Naive thymus-derived CD4-positive, alpha-beta T cell (primary cell): ENCODE measurements at regions of chr12 and their contacts with region 1.

Region 1: GRCh38 chr12:6423267-6424007 is 21.3 kb upstream of the CD27 start:
- DNase-seq: peak; percentile 47 to 88 (median 80)
- ATAC-seq: peak; percentile 90
- H3K4me3 ChIP-seq: no peak overlapping the region
- H3K4me3 Mint-ChIP-seq: peak overlapping the region in 7 of 10 donors; percentile 10 to 69 (median 27)
- H3K27ac ChIP-seq: peak overlapping the region; percentile 56
- H3K27ac Mint-ChIP-seq: peak overlapping the region; percentile 66 to 97 (median 86)
- H3K4me1 ChIP-seq: peaks cover 30 to 31% of the 10 kb centered on the region in 2 donors
- H3K4me1 Mint-ChIP-seq: peaks cover 18 to 46% (median 38%) of the 10 kb centered on the region in 7 donors
- H3K27me3 ChIP-seq: no peaks in the 10 kb centered on the region
- H3K27me3 Mint-ChIP-seq: no peaks in the 10 kb centered on the region

Region 2: GRCh38 chr12:6335451-6336078 is 87.9 kb before region 1 on chr12:
- CTCF ChIA-PET with region 1: interaction called, 13 read pairs
- POLR2A ChIA-PET with region 1: interaction called, 28 read pairs
- intact Hi-C with region 1: loop called (anchors 1 kb)
- DNase-seq: peak; percentile 56 to 85 (median 81)
- ATAC-seq: peak; percentile 82
- H3K4me3 ChIP-seq: peak overlapping the region; percentile 88
- H3K4me3 Mint-ChIP-seq: no peak overlapping the region
- H3K27ac ChIP-seq: peak overlapping the region; percentile 92
- H3K27ac Mint-ChIP-seq: no peak overlapping the region
- H3K4me1 ChIP-seq: peaks cover 58 to 67% of the 10 kb centered on the region in 2 donors
- H3K4me1 Mint-ChIP-seq: peaks cover 4 to 44% (median 36%) of the 10 kb centered on the region in 7 donors
- H3K27me3 ChIP-seq: no peaks in the 10 kb centered on the region
- H3K27me3 Mint-ChIP-seq: no peaks in the 10 kb centered on the region

Region 3: DNA sequence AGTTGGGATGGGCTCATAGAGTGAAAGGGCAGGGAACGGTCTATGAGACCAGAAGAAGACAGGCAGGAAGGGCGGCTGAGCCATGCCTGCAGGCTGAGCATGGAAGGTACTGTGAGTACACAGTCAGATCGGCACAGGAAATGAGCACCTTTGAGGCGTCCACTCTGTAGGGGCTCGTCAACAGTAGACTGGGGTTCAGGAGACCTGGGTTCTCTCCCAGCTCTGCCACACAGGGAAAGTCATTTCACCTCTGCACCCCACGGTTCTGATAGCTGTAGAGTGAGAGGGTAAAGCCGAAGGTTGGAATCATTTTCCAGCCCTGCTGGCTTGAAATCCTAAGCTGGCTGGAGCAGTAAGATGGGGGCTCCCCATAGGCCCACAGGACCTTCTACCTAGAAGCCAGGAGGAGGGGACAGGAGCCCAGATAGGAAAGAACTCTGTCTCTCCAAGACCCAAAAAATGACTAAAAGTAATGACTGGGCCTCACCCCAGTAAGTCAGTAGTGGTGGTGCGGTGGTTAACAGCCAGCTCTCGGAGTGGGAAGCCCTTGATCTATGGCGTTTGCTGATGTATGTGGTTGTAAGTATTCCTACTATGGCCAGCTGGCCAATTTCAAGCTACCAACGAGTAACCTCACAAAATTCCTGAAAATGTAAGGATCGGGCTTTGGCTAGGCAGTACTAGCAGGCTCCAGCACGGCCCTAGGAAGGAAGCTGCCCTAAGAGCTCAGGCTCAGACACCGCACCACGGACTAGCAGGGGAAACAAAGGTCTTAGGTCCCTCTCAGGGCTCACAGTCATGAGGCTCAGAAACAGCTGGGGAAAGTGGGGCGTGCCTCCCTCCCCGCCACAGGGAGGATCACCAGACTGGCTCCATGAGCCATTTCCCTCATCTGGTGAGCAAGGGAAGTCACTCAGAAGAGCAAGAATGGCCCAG is 11.0 kb after region 1 on chr12:
- CTCF ChIA-PET with region 1: interaction called, 25 read pairs
- POLR2A ChIA-PET with region 1: interaction called, 156 read pairs
- intact Hi-C with region 1: no loop called
- DNase-seq: peak in 7 of 9 donors; percentile 41 to 60 (median 56)
- ATAC-seq: peak; percentile 80
- H3K4me3 ChIP-seq: peak overlapping the region; percentile 30
- H3K4me3 Mint-ChIP-seq: peak overlapping the region; percentile 55 to 85 (median 76)
- H3K27ac ChIP-seq: peak overlapping the region; percentile 68
- H3K27ac Mint-ChIP-seq: peak overlapping the region; percentile 90 to 98 (median 92)
- H3K4me1 ChIP-seq: peaks cover 18 to 30% of the 10 kb centered on the region in 2 donors
- H3K4me1 Mint-ChIP-seq: peaks cover 24 to 59% (median 53%) of the 10 kb centered on the region in 7 donors
- H3K27me3 ChIP-seq: no peaks in the 10 kb centered on the region
- H3K27me3 Mint-ChIP-seq: no peaks in the 10 kb centered on the region

Region 4: GRCh38 chr12:6451348-6452244 is 28.2 kb after region 1 on chr12 and contains the start of gene TAPBPL:
- CTCF ChIA-PET with region 1: interaction called, 51 read pairs
- POLR2A ChIA-PET with region 1: interaction called, 156 read pairs
- intact Hi-C with region 1: loop called (anchors 1 kb)
- DNase-seq: peak; percentile 49 to 93 (median 87)
- ATAC-seq: peak; percentile 94
- H3K4me3 ChIP-seq: peak within 1 kb of the TSS; percentile 83
- H3K4me3 Mint-ChIP-seq: peak within 1 kb of the TSS; percentile 96 to 100 (median 98)
- H3K27ac ChIP-seq: peak within 1 kb of the TSS; percentile 96
- H3K27ac Mint-ChIP-seq: peak within 1 kb of the TSS; percentile 96 to 100 (median 99)
- H3K4me1 ChIP-seq: peaks cover 50% of the 10 kb centered on the region in 2 donors
- H3K4me1 Mint-ChIP-seq: peaks cover 50 to 84% (median 73%) of the 10 kb centered on the region in 7 donors
- H3K27me3 ChIP-seq: no peaks in the 10 kb centered on the region
- H3K27me3 Mint-ChIP-seq: no peaks in the 10 kb centered on the region
- total RNA-seq, gene TAPBPL: 23.0 to 65.4 (median 52.9) TPM

Region 5: GRCh38 chr12:6470375-6471163 is 47.1 kb after region 1 on chr12 and contains the start of gene VAMP1:
- CTCF ChIA-PET with region 1: interaction called, 201 read pairs
- POLR2A ChIA-PET with region 1: interaction called, 237 read pairs
- intact Hi-C with region 1: loop called (anchors 1 kb)
- DNase-seq: peak; percentile 90 to 97 (median 95)
- ATAC-seq: peak; percentile 94
- H3K4me3 ChIP-seq: peak within 1 kb of the TSS; percentile 96
- H3K4me3 Mint-ChIP-seq: peak within 1 kb of the TSS; percentile 85 to 96 (median 92)
- H3K27ac ChIP-seq: peak within 1 kb of the TSS; percentile 75
- H3K27ac Mint-ChIP-seq: peak within 1 kb of the TSS; percentile 79 to 99 (median 95)
- H3K4me1 ChIP-seq: peaks cover 38 to 39% of the 10 kb centered on the region in 2 donors
- H3K4me1 Mint-ChIP-seq: peaks cover 26 to 59% (median 52%) of the 10 kb centered on the region in 7 donors
- H3K27me3 ChIP-seq: no peaks in the 10 kb centered on the region
- H3K27me3 Mint-ChIP-seq: peaks cover 0 to 5% (median 0%) of the 10 kb centered on the region in 5 donors
- total RNA-seq, gene VAMP1: 38.7 to 123 (median 47.9) TPM

Region 6: DNA sequence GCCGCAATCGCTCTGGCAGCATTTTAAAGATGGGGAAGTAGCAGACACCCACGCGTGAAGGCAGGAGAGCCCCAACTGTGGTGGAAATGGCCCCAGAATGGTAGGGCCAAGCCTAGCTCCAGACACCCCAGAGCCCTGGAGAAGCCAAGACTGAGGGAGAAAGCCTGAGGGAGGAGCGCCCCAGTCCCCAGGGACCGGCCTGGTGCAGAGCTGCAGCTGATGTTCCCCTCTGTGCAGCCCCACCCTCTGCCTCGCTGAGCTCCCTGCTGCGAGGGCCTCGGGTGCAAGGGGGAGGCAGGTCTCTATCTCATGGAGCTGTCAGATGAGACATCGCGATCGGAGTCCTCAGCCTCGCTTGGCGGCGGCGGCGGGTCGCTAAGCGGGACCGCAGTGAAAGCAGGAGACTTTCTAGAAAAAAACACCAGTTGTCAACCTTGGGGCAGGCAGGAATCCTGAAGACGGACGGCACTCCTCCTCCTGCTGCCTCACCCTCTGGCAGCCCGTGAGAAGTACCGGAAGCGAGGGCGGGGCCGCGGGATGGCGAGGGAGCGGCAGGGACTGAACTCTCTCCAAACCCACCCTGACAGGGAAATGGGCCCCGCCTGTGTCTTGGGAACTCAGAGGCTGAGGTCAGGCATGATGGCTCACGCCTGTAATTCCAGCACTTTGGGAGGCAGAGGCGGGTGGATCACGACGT is 116.9 kb after region 1 on chr12:
- CTCF ChIA-PET with region 1: interaction called, 106 read pairs
- POLR2A ChIA-PET with region 1: interaction called, 104 read pairs
- intact Hi-C with region 1: loop called (anchors 1 kb)
- DNase-seq: peak in 6 of 9 donors; percentile 29 to 69 (median 36)
- ATAC-seq: peak; percentile 23
- H3K4me3 ChIP-seq: peak overlapping the region; percentile 27
- H3K4me3 Mint-ChIP-seq: peak overlapping the region; percentile 66 to 85 (median 80)
- H3K27ac ChIP-seq: peak overlapping the region; percentile 54
- H3K27ac Mint-ChIP-seq: peak overlapping the region; percentile 57 to 92 (median 83)
- H3K4me1 ChIP-seq: peaks cover 23 to 34% of the 10 kb centered on the region in 2 donors
- H3K4me1 Mint-ChIP-seq: peaks cover 32 to 61% (median 56%) of the 10 kb centered on the region in 7 donors
- H3K27me3 ChIP-seq: no peaks in the 10 kb centered on the region
- H3K27me3 Mint-ChIP-seq: no peaks in the 10 kb centered on the region

Region 7: GRCh38 chr12:6662906-6663742 is 239.7 kb after region 1 on chr12 and contains the start of gene ING4:
- CTCF ChIA-PET with region 1: no interaction called
- POLR2A ChIA-PET with region 1: no interaction called
- intact Hi-C with region 1: loop called in 1 of 2 experiments (anchors 10 kb)
- DNase-seq: peak; percentile 79 to 99 (median 98)
- ATAC-seq: peak; percentile 99
- H3K4me3 ChIP-seq: peak within 1 kb of the TSS; percentile 92
- H3K4me3 Mint-ChIP-seq: peak within 1 kb of the TSS; percentile 92 to 99 (median 96)
- H3K27ac ChIP-seq: peak within 1 kb of the TSS; percentile 80
- H3K27ac Mint-ChIP-seq: peak within 1 kb of the TSS; percentile 91 to 99 (median 96)
- H3K4me1 ChIP-seq: peaks cover 15 to 16% of the 10 kb centered on the region in 2 donors
- H3K4me1 Mint-ChIP-seq: peaks cover 18 to 47% (median 36%) of the 10 kb centered on the region in 7 donors
- H3K27me3 ChIP-seq: no peaks in the 10 kb centered on the region
- H3K27me3 Mint-ChIP-seq: peaks cover 0 to 2% (median 0%) of the 10 kb centered on the region in 5 donors
- total RNA-seq, gene ING4: 33.1 to 101 (median 39.6) TPM